Activated naive CD4-positive, alpha-beta T cell treated with anti-CD3 and anti-CD28 coated beads for 36 hours (primary cell): ENCODE measurements at regions of chr14 and their contacts with region 1.

Region 1: DNA sequence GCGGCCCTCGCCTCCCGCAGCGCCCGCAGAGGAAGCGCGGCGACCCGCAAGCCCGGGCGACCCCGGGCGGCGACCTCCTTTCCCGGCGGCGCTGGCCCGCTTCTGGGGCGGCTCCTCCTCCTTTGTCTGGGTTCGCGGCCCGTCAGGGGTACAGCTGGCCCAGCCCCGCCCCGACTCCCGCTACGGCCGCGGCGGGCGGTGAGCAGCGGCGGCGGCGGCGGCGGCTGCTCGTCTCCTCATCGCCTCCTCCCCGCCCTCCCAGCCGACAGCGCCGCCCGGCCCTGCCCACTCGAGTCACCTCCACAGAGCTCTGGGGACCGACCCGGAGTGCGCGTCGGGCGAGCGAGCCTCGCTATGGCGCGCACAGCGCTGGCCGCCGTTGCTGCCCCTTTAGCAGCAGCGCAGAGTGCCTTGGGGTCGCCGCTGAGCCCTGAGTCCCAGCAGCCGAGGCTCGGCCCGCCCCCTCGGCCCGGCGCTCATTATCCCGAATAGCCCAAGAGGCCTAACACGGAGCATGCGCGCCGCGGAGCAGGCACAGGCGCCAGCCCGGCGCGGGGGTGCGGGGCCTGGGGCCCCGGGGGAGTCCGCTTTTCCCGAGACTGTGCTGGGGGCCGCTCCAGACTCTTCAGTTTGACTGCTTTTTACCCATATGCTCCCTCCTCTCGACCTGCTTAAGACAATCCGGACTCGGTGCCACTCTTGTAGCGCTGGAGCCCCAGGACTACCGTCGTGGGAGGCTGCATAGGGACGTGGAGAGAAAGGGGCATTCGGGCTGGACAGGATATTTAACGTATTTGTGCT is at the start of gene SOS2:
- DNase-seq: peak; percentile 83
- H3K4me3 Mint-ChIP-seq: peak within 1 kb of the TSS; percentile 76
- H3K27ac Mint-ChIP-seq: peak within 1 kb of the TSS; percentile 87
- H3K4me1 Mint-ChIP-seq: peaks cover 33% of the 10 kb centered on the region
- H3K27me3 Mint-ChIP-seq: no peaks in the 10 kb centered on the region
- total RNA-seq, gene SOS2: 20.3 to 22.1 TPM

Region 2: DNA sequence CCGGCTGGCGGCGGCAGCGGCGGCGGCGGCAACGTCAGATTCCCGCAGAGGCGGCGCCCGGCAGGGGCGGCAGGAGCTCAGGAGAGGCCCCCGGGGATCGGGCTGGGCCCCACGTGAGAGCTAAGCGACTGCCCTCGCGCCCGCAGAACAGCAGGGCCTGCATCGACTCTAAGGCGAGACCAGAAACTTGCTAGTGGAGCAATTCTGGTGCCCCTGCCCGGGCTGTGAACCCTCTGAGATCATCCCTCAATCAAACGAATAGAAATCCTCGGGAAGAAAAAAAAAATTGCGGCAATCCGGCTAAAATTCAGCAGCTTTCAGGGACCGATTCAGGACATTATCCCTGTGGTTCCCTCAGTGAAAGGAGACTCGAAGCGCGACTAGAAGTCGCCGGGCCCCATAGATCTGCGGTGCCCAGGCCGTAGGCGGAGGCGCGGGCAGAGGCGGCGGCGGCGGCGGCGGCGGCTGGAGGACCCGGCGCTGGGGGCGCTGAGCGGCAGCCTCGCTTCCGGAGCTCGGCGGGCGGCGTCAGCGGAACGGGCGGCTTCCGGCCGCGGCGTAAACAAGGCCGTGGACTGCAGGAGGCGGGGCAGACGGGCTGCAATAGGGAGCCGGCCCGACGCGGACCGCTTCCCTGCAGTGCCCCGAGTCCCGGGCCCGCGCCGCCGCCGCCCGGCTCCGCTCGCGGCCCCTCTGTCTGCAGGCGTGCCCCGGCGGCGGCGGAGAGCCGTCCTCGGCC is 463.9 kb before region 1 on chr14 and contains the start of gene KLHDC2:
- CTCF ChIA-PET with region 1: no interaction called
- intact Hi-C with region 1: loop called (anchors 1 kb)
- DNase-seq: peak; percentile 91
- H3K4me3 Mint-ChIP-seq: peak within 1 kb of the TSS; percentile 94
- H3K27ac Mint-ChIP-seq: peak within 1 kb of the TSS; percentile 99
- H3K4me1 Mint-ChIP-seq: peaks cover 34% of the 10 kb centered on the region
- H3K27me3 Mint-ChIP-seq: no peaks in the 10 kb centered on the region
- total RNA-seq, gene KLHDC2: 24.3 to 25.0 TPM

Region 3: DNA sequence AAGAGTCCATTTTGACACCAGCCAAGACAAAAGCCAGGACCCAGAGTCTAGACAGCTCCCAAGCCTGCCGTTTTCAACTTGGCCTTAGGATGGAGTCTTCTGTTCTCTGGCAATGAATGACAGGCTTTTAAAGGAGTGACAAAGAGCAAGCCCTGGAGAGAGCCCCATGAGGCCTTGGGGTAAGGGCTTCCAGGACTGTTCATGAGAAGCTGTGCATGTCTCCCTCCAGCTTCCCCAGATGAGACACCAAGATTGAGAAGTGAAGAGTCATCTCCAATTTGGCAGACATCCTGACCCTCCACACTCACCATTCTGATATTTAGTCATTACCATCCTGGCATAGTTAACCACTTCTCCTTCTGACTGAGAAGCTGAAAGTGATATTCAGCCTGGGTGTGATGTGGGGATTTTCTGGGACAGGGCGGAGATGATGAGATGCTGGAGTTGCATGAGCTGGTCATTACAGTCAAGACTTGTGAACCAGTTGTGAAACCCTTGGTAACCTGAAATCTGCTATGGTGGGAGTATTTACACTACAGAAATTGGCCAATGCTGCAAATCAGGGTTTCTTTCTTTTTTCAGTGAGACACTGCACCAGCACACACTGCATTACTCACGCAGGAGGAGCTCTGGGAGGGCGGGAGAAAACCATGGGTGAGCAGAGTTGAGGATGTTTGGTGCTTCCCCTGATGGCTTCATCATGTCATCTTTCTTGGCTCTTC is 193.1 kb before region 1 on chr14:
- CTCF ChIA-PET with region 1: no interaction called
- intact Hi-C with region 1: loop called (anchors 1 kb)
- DNase-seq: peak; percentile 92
- H3K4me3 Mint-ChIP-seq: peak overlapping the region; percentile 16
- H3K27ac Mint-ChIP-seq: peak overlapping the region; percentile 91
- H3K4me1 Mint-ChIP-seq: peaks cover 46% of the 10 kb centered on the region
- H3K27me3 Mint-ChIP-seq: no peaks in the 10 kb centered on the region

Region 4: GRCh38 chr14:50321009-50321660 is 89.5 kb after region 1 on chr14:
- CTCF ChIA-PET with region 1: no interaction called
- intact Hi-C with region 1: loop called (anchors 1 kb)
- DNase-seq: peak; percentile 80
- H3K4me3 Mint-ChIP-seq: no peak overlapping the region
- H3K27ac Mint-ChIP-seq: no peak overlapping the region
- H3K4me1 Mint-ChIP-seq: peaks cover 25% of the 10 kb centered on the region
- H3K27me3 Mint-ChIP-seq: no peaks in the 10 kb centered on the region

Region 5: GRCh38 chr14:50726372-50727107 is 494.9 kb after region 1 on chr14:
- CTCF ChIA-PET with region 1: no interaction called
- intact Hi-C with region 1: loop called (anchors 2 kb)
- DNase-seq: peak; percentile 48
- H3K4me3 Mint-ChIP-seq: peak overlapping the region; percentile 3
- H3K27ac Mint-ChIP-seq: peak overlapping the region; percentile 83
- H3K4me1 Mint-ChIP-seq: peaks cover 28% of the 10 kb centered on the region
- H3K27me3 Mint-ChIP-seq: no peaks in the 10 kb centered on the region

Region 6: GRCh38 chr14:51651388-51652167 is 1419.9 kb after region 1 on chr14 and contains the start of gene FRMD6:
- CTCF ChIA-PET with region 1: no interaction called
- intact Hi-C with region 1: loop called (anchors 5 kb)
- DNase-seq: peak; percentile 82
- H3K4me3 Mint-ChIP-seq: peak within 1 kb of the TSS; percentile 78
- H3K27ac Mint-ChIP-seq: peak within 1 kb of the TSS; percentile 41
- H3K4me1 Mint-ChIP-seq: peaks cover 21% of the 10 kb centered on the region
- H3K27me3 Mint-ChIP-seq: peaks cover 7% of the 10 kb centered on the region
- total RNA-seq, gene FRMD6: 3.0 to 3.2 TPM